ENCODE measurements at regions of chr1 and their contacts with region 1.

Region 1: GRCh38 chr1:9784508-9785133 is 39.1 kb downstream of the CLSTN1 start:
- DNase-seq: peak; percentile 75
- H3K4me3 Mint-ChIP-seq: no peak overlapping the region
- H3K27ac Mint-ChIP-seq: no peak overlapping the region
- H3K4me1 Mint-ChIP-seq: no peaks in the 10 kb centered on the region
- H3K27me3 Mint-ChIP-seq: no peaks in the 10 kb centered on the region
- CTCF ChIP-seq: peak; percentile 77

Region 2: GRCh38 chr1:9569267-9569666 is 215.4 kb before region 1 on chr1:
- CTCF ChIA-PET with region 1: no interaction called
- POLR2A ChIA-PET with region 1: no interaction called
- intact Hi-C with region 1: no loop called
- DNase-seq: no peak
- H3K4me3 Mint-ChIP-seq: no peak overlapping the region
- H3K27ac Mint-ChIP-seq: peak overlapping the region; percentile 0
- H3K4me1 Mint-ChIP-seq: no peaks in the 10 kb centered on the region
- H3K27me3 Mint-ChIP-seq: no peaks in the 10 kb centered on the region
- CTCF ChIP-seq: no peak

Region 3: GRCh38 chr1:9629445-9630201 is 155.0 kb before region 1 on chr1:
- CTCF ChIA-PET with region 1: interaction called, 7 read pairs
- POLR2A ChIA-PET with region 1: no interaction called
- intact Hi-C with region 1: loop called (anchors 5 kb)
- DNase-seq: no peak
- H3K4me3 Mint-ChIP-seq: no peak overlapping the region
- H3K27ac Mint-ChIP-seq: no peak overlapping the region
- H3K4me1 Mint-ChIP-seq: no peaks in the 10 kb centered on the region
- H3K27me3 Mint-ChIP-seq: peaks cover 10% of the 10 kb centered on the region
- CTCF ChIP-seq: no peak

Region 4: GRCh38 chr1:9805006-9805508 is 20.4 kb after region 1 on chr1:
- CTCF ChIA-PET with region 1: interaction called, 22 read pairs
- POLR2A ChIA-PET with region 1: interaction called, 8 read pairs
- intact Hi-C with region 1: no loop called
- DNase-seq: no peak
- H3K4me3 Mint-ChIP-seq: peak overlapping the region; percentile 16
- H3K27ac Mint-ChIP-seq: peak overlapping the region; percentile 89
- H3K4me1 Mint-ChIP-seq: peaks cover 23% of the 10 kb centered on the region
- H3K27me3 Mint-ChIP-seq: no peaks in the 10 kb centered on the region
- CTCF ChIP-seq: no peak

Region 5: GRCh38 chr1:9861360-9861759 is 76.7 kb after region 1 on chr1:
- CTCF ChIA-PET with region 1: interaction called, 190 read pairs
- POLR2A ChIA-PET with region 1: interaction called, 4 read pairs
- intact Hi-C with region 1: no loop called
- DNase-seq: no peak
- H3K4me3 Mint-ChIP-seq: no peak overlapping the region
- H3K27ac Mint-ChIP-seq: no peak overlapping the region
- H3K4me1 Mint-ChIP-seq: no peaks in the 10 kb centered on the region
- H3K27me3 Mint-ChIP-seq: no peaks in the 10 kb centered on the region
- CTCF ChIP-seq: no peak

Region 6: DNA sequence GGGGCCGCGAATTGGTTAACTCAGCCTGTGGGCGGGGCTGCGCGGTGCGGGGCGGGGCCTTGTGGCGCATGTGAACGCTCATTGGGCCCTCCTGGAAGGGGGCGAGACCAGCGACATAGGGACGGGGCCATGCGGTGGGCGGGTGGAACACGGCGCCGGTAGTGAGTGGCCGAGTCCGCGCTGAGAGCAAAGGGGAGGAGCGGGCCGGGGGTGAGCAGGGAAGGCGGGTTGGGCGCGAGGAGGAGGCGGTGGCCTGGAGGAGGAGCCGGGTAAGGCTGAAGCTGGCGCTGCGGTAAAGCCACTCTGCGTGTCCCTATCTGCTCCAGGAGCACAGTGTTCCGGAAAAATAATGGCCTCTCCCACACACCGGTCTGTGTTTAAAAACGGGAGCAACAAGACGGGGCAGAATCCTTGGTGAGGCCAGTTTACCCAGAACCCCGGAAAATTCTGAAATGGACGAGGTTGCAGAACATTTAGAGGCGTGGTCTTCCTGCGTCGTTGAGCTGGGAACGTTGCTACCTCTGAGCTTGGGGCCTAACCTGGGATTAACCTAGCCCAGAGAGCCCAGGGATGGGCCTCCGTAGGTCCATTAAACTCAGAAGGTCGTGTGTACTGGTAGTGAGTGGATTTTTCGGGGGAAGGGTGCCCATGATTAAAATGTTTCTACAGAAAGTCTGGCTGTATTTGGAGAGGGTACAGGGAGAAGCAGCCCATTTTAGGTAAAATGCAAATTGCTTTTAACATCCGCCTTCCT is 126.0 kb after region 1 on chr1:
- CTCF ChIA-PET with region 1: interaction called, 10 read pairs
- POLR2A ChIA-PET with region 1: interaction called, 3 read pairs
- intact Hi-C with region 1: no loop called
- DNase-seq: peak; percentile 99
- H3K4me3 Mint-ChIP-seq: peak overlapping the region; percentile 93
- H3K27ac Mint-ChIP-seq: peak overlapping the region; percentile 99
- H3K4me1 Mint-ChIP-seq: peaks cover 30% of the 10 kb centered on the region
- H3K27me3 Mint-ChIP-seq: no peaks in the 10 kb centered on the region
- CTCF ChIP-seq: no peak